Heart left ventricle (tissue), 16 donors: ENCODE measurements at regions of chr1 and their contacts with region 1.

Region 1: GRCh38 chr1:26094677-26095383 is 16.8 kb upstream of the PDIK1L start:
- DNase-seq: peak; percentile 51 to 87 (median 55)
- ATAC-seq: peak; percentile 71 to 79 (median 74)
- H3K4me3 ChIP-seq: peak overlapping the region in 7 of 12 donors; percentile 7 to 27 (median 18)
- H3K27ac ChIP-seq: peak overlapping the region; percentile 47 to 99 (median 88)
- H3K4me1 ChIP-seq: peaks cover 0 to 24% (median 14%) of the 10 kb centered on the region in 12 donors
- H3K27me3 ChIP-seq: peaks cover 0 to 13% (median 0%) of the 10 kb centered on the region in 9 donors
- CTCF ChIP-seq: peak in 7 of 12 donors; percentile 7 to 34 (median 22)
- POLR2A ChIP-seq: peak in 1 of 2 donors; percentile 39

Region 2: DNA sequence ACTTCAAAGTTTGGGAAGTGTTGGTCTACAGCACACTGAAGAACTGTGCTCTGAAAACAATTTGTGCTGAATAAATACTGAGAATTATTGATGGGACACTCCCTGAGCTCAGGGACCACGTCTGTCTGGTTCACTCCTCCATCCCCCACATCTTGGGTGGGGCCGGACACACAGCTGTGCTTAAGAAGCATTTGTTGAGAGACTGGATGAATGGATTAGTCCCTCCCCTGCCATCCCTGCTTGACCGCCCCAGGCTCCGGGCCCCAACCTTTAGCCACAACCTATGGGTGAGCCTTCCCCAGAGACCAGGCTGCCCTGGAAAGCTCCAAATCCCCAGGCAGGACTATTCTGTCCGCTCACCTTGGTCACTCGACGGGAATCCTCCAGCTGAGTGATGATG is 34.9 kb before region 1 on chr1:
- intact Hi-C with region 1: loop called in 2 of 10 experiments (anchors 1 to 5 kb)
- DNase-seq: no peak
- ATAC-seq: no peak
- H3K4me3 ChIP-seq: peak overlapping the region in 1 of 12 donors; percentile 62
- H3K27ac ChIP-seq: peak overlapping the region in 7 of 12 donors; percentile 55 to 100 (median 79)
- H3K4me1 ChIP-seq: peaks cover 0 to 51% (median 11%) of the 10 kb centered on the region in 12 donors
- H3K27me3 ChIP-seq: peaks cover 0 to 17% (median 0%) of the 10 kb centered on the region in 9 donors
- CTCF ChIP-seq: no peak
- POLR2A ChIP-seq: no peak

Region 3: DNA sequence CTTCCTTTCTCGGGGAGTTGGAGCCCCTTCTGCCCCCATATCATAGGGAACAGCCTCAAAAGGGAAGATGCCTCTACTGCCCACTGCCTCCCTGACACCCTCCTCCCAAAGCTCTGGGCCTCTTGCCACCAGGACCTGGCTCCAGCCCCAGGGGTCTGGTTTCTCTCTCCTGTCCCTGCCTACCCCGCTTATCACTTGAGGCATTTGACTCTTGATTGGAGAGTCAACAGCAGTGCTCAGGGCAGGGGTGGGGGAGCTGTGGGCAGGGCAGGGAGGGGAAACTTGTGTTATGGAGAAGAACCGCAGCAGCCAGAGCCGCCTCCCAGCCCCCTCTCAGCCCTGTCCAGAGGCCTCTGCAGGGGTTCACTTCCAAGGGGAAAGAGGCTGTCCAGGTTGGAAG is 28.0 kb before region 1 on chr1:
- intact Hi-C with region 1: loop called in 4 of 10 experiments (anchors 1 to 2 kb)
- DNase-seq: peak; percentile 77 to 90 (median 85)
- ATAC-seq: peak; percentile 88 to 92 (median 91)
- H3K4me3 ChIP-seq: peak overlapping the region; percentile 43 to 91 (median 63)
- H3K27ac ChIP-seq: peak overlapping the region; percentile 71 to 100 (median 88)
- H3K4me1 ChIP-seq: peaks cover 0 to 21% (median 0%) of the 10 kb centered on the region in 12 donors
- H3K27me3 ChIP-seq: peaks cover 0 to 19% (median 0%) of the 10 kb centered on the region in 9 donors
- CTCF ChIP-seq: no peak
- POLR2A ChIP-seq: no peak

Region 4: GRCh38 chr1:26083246-26083645 is 11.6 kb before region 1 on chr1:
- intact Hi-C with region 1: loop called in 1 of 10 experiments (anchors 1 kb)
- DNase-seq: peak in 4 of 5 donors; percentile 48 to 72 (median 58)
- ATAC-seq: peak; percentile 83 to 86 (median 84)
- H3K4me3 ChIP-seq: peak overlapping the region in 1 of 12 donors; percentile 8
- H3K27ac ChIP-seq: peak overlapping the region; percentile 67 to 93 (median 78)
- H3K4me1 ChIP-seq: peaks cover 0 to 37% (median 0%) of the 10 kb centered on the region in 12 donors
- H3K27me3 ChIP-seq: no peaks in the 10 kb centered on the region
- CTCF ChIP-seq: no peak
- POLR2A ChIP-seq: peak in 1 of 2 donors; percentile 48

Region 5: GRCh38 chr1:26529655-26530409 is 435.0 kb after region 1 on chr1 and contains the start of gene RPS6KA1:
- intact Hi-C with region 1: no loop called
- DNase-seq: peak; percentile 51 to 81 (median 64)
- ATAC-seq: peak in 3 of 4 donors; percentile 78 to 87 (median 78)
- H3K4me3 ChIP-seq: peak within 1 kb of the TSS; percentile 48 to 93 (median 68)
- H3K27ac ChIP-seq: peak within 1 kb of the TSS in 3 of 12 donors; percentile 27 to 61 (median 39)
- H3K4me1 ChIP-seq: peaks cover 0 to 23% (median 5%) of the 10 kb centered on the region in 12 donors
- H3K27me3 ChIP-seq: peaks cover 0 to 4% (median 0%) of the 10 kb centered on the region in 9 donors
- CTCF ChIP-seq: no peak
- POLR2A ChIP-seq: peak in 1 of 2 donors; percentile 27
- total RNA-seq, gene RPS6KA1: 1.1 to 24.4 (median 3.8) TPM